ENCODE measurements at regions of chr20 and their contacts with region 1.

Region 1: GRCh38 chr20:63973636-63974402 is 4.1 kb upstream of the ZNF512B start:
- DNase-seq: peak; percentile 65
- H3K4me3 ChIP-seq: peak overlapping the region in 2 of 3 experiments; percentile 41 to 47
- H3K27ac ChIP-seq: no peak overlapping the region
- H3K4me1 ChIP-seq: peaks cover 25% of the 10 kb centered on the region
- H3K27me3 ChIP-seq: no peaks in the 10 kb centered on the region
- CTCF ChIP-seq: peak; percentile 89 to 97

Region 2: GRCh38 chr20:63707549-63708300 is 266.1 kb before region 1 on chr20 and contains the starts of genes ARFRP1 and ZGPAT:
- CTCF ChIA-PET with region 1: no interaction called
- dilution Hi-C with region 1: no loop called
- in situ Hi-C with region 1: no loop called
- intact Hi-C with region 1: loop called (anchors 1 kb)
- DNase-seq: peak; percentile 81
- H3K4me3 ChIP-seq: peak within 1 kb of the TSS; percentile 79 to 88 (median 84)
- H3K27ac ChIP-seq: peak within 1 kb of the TSS; percentile 34
- H3K4me1 ChIP-seq: peaks cover 21% of the 10 kb centered on the region
- H3K27me3 ChIP-seq: no peaks in the 10 kb centered on the region
- CTCF ChIP-seq: no peak
- total RNA-seq, gene ARFRP1: 28.8 to 61.1 TPM
- total RNA-seq, gene ZGPAT: 11.8 to 20.9 TPM

Region 3: DNA sequence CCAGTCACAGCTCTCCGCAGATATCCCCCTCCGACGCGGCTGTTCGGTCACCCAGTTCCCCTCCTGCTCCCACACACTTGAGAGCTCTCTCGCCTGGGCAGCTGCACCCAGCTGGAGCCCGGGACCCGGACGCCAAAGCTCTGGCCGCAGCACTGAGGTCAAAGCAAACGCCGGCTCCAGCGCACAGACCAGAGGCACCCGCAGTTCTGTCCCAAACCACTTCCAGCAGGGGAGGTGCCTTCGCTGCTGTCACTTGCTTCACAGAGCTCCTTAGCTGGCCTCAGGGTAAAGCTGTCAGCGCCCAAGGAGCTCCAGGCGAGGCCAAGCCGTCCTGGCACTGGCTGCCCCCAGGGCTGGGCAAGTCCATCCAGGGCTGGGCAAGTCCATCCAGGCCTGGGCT is 206.4 kb before region 1 on chr20:
- CTCF ChIA-PET with region 1: no interaction called
- dilution Hi-C with region 1: no loop called
- in situ Hi-C with region 1: no loop called
- intact Hi-C with region 1: no loop called
- DNase-seq: no peak
- H3K4me3 ChIP-seq: no peak overlapping the region
- H3K27ac ChIP-seq: no peak overlapping the region
- H3K4me1 ChIP-seq: no peaks in the 10 kb centered on the region
- H3K27me3 ChIP-seq: no peaks in the 10 kb centered on the region
- CTCF ChIP-seq: no peak

Region 4: GRCh38 chr20:63785691-63786131 is 188.1 kb before region 1 on chr20:
- CTCF ChIA-PET with region 1: no interaction called
- dilution Hi-C with region 1: no loop called
- in situ Hi-C with region 1: no loop called
- intact Hi-C with region 1: loop called (anchors 5 kb)
- DNase-seq: no peak
- H3K4me3 ChIP-seq: no peak overlapping the region
- H3K27ac ChIP-seq: no peak overlapping the region
- H3K4me1 ChIP-seq: no peaks in the 10 kb centered on the region
- H3K27me3 ChIP-seq: no peaks in the 10 kb centered on the region
- CTCF ChIP-seq: no peak

Region 5: GRCh38 chr20:63911176-63911575 is 62.6 kb before region 1 on chr20:
- CTCF ChIA-PET with region 1: no interaction called
- dilution Hi-C with region 1: no loop called
- in situ Hi-C with region 1: no loop called
- intact Hi-C with region 1: loop called (anchors 1 kb)
- DNase-seq: peak; percentile 99
- H3K4me3 ChIP-seq: peak overlapping the region in 2 of 3 experiments; percentile 15 to 27
- H3K27ac ChIP-seq: peak overlapping the region; percentile 70
- H3K4me1 ChIP-seq: peaks cover 35% of the 10 kb centered on the region
- H3K27me3 ChIP-seq: no peaks in the 10 kb centered on the region
- CTCF ChIP-seq: no peak

Region 6: GRCh38 chr20:64053841-64054661 is 80.2 kb after region 1 on chr20:
- CTCF ChIA-PET with region 1: no interaction called
- dilution Hi-C with region 1: loop called (anchors 5 kb)
- in situ Hi-C with region 1: no loop called
- intact Hi-C with region 1: no loop called
- DNase-seq: no peak
- H3K4me3 ChIP-seq: no peak overlapping the region
- H3K27ac ChIP-seq: no peak overlapping the region
- H3K4me1 ChIP-seq: peaks cover 14% of the 10 kb centered on the region
- H3K27me3 ChIP-seq: no peaks in the 10 kb centered on the region
- CTCF ChIP-seq: peak in 1 of 2 donors; percentile 17

Measured in mammary epithelial cell (primary cell).